Calu3 (cell line): ENCODE measurements at regions of chr1 and their contacts with region 1.

Region 1: DNA sequence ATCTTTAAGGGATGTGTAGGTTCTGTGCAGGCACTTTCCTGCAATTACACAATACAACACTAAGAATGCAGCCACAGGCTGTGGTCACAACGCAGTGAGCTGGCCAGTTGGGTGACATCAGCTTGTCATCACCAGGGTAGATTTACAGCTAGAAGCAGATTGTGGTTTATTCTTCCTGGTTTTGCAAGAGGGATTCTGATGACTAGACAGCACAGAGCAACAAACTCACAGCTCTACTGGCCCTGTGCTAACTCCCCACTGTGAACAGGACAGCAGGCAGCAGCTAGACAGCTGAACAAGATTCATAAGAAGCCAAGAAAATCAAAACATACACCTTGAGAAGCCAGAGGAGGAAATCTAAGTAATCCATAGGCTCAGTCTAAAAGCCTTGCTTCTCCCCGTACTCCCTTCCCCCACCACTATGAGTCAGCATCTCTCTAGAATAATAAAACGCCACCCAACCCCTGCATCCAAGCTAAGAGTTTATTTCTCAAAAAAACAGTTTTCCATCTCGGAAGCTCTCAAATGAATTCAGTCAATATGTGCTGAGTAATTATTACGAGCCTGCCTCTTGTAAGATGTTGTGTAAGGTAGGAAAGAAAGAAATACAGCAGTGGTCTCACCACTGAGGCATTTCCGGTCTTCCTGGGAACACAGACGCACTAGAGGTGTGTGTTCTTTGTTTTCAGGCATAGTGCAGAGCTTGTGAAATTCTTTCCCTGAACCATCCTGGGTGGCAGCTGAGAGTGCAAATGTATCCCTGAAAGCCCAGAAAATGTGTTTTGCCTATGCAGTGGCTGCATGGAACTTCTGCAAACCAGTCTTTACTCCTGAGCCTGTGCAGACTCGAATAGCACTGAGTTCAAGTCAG is 162.8 kb downstream of the NTPCR start:
- DNase-seq: peak; percentile 79
- H3K4me3 Mint-ChIP-seq: peak overlapping the region; percentile 69
- H3K27ac Mint-ChIP-seq: peak overlapping the region; percentile 84
- H3K4me1 Mint-ChIP-seq: peaks cover 37% of the 10 kb centered on the region
- H3K27me3 Mint-ChIP-seq: no peaks in the 10 kb centered on the region
- CTCF ChIP-seq: no peak

Region 2: GRCh38 chr1:233097959-233098580 is 15.2 kb before region 1 on chr1:
- CTCF ChIA-PET with region 1: no interaction called
- intact Hi-C with region 1: no loop called
- DNase-seq: no peak
- H3K4me3 Mint-ChIP-seq: no peak overlapping the region
- H3K27ac Mint-ChIP-seq: no peak overlapping the region
- H3K4me1 Mint-ChIP-seq: peaks cover 8% of the 10 kb centered on the region
- H3K27me3 Mint-ChIP-seq: no peaks in the 10 kb centered on the region
- CTCF ChIP-seq: no peak

Region 3: GRCh38 chr1:233172227-233172626 is 59.0 kb after region 1 on chr1:
- CTCF ChIA-PET with region 1: no interaction called
- intact Hi-C with region 1: loop called (anchors 5 kb)
- DNase-seq: no peak
- H3K4me3 Mint-ChIP-seq: no peak overlapping the region
- H3K27ac Mint-ChIP-seq: no peak overlapping the region
- H3K4me1 Mint-ChIP-seq: no peaks in the 10 kb centered on the region
- H3K27me3 Mint-ChIP-seq: no peaks in the 10 kb centered on the region
- CTCF ChIP-seq: no peak